Calu3 (cell line): ENCODE measurements at regions of chr15 and their contacts with region 1.

Region 1: GRCh38 chr15:89057504-89058133 is 30.6 kb upstream of the ABHD2 start:
- DNase-seq: peak; percentile 95
- H3K4me3 Mint-ChIP-seq: no peak overlapping the region
- H3K27ac Mint-ChIP-seq: peak overlapping the region; percentile 30
- H3K4me1 Mint-ChIP-seq: peaks cover 47% of the 10 kb centered on the region
- H3K27me3 Mint-ChIP-seq: no peaks in the 10 kb centered on the region
- CTCF ChIP-seq: peak; percentile 99

Region 2: DNA sequence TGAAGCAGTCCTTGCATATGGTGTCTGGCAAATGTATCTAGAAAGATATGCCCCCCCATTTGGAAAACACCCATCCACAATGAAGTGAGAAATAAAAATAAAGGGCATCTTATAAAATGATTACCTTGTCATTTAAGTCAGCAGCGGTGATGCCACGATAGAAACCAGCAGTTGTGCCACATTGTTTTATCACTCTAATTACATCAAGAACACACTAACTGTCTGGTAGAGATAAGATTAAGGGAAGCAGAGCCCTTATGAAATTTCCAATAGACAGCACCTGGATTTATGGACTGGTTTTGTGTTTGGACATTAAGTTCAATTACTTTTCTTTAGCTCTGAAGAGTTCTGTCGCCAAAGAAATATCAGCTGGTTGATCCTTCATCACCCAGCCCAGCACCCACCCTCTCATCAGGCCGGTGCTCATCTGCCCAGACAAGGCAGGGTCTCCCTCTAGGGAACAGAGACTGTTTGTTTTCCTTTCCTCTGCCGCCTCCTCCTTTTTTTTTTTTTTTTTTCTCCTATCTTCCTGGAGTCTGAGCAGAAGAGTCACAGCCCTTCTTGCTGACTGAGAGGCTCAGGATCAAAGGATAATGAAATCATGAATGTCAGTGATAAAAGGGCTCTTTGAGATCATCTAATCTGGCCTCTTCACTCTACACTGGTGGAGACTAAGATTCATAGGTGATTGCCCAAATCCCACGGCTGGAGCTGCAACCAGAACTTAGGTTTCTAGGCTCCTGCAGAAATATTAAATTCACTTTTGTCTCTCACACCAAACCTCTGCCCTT is 1265.2 kb before region 1 on chr15:
- CTCF ChIA-PET with region 1: no interaction called
- intact Hi-C with region 1: no loop called
- DNase-seq: no peak
- H3K4me3 Mint-ChIP-seq: no peak overlapping the region
- H3K27ac Mint-ChIP-seq: no peak overlapping the region
- H3K4me1 Mint-ChIP-seq: no peaks in the 10 kb centered on the region
- H3K27me3 Mint-ChIP-seq: no peaks in the 10 kb centered on the region
- CTCF ChIP-seq: no peak

Region 3: DNA sequence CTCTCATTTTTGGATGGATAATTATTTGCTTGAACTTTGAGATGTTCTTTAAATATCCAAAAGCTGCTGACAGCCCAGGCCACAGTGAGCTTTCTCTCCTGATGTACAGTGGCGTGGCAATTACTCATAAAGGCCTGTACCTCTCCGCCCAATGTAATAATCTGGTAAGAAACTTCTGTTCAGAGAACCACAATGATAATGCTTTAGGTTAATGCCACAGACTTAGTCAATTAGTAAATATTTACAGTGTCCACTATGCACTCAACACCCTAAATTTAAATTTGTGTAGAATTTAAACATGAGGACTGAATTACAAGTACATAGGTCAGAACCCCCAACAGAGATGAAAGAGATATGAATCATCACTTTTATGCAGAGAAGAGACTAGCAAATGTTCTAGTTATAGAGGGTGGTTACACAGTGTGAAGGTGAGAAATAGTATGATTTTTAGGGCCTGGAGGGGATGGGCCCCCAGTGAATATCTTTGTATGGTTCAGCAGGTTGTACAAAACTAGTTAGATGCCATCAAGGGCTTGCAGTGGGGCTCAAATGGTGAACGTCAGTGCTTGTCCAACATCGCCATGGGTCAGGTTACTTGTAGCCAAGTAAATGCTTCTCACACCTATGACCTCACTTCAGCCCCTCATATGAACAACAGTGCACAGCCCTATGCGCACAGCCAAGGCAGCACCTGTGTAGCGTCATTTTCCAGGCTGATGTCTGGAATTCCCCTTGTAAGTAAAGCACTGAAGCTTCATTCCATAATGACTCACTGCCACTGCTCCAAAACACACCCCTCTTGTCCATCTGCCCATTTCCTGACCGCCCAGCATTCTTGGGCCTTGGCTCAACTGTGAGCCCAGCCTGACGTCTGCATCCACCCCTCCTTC is 43.9 kb after region 1 on chr15:
- CTCF ChIA-PET with region 1: interaction called, 7 read pairs
- intact Hi-C with region 1: loop called (anchors 1 kb)
- DNase-seq: peak; percentile 88
- H3K4me3 Mint-ChIP-seq: peak overlapping the region; percentile 1
- H3K27ac Mint-ChIP-seq: peak overlapping the region; percentile 69
- H3K4me1 Mint-ChIP-seq: peaks cover 66% of the 10 kb centered on the region
- H3K27me3 Mint-ChIP-seq: no peaks in the 10 kb centered on the region
- CTCF ChIP-seq: no peak

Region 4: GRCh38 chr15:89119489-89120123 is 62.0 kb after region 1 on chr15:
- CTCF ChIA-PET with region 1: no interaction called
- intact Hi-C with region 1: loop called (anchors 2 kb)
- DNase-seq: peak; percentile 62
- H3K4me3 Mint-ChIP-seq: peak overlapping the region; percentile 54
- H3K27ac Mint-ChIP-seq: peak overlapping the region; percentile 98
- H3K4me1 Mint-ChIP-seq: peaks cover 98% of the 10 kb centered on the region
- H3K27me3 Mint-ChIP-seq: no peaks in the 10 kb centered on the region
- CTCF ChIP-seq: no peak

Region 5: DNA sequence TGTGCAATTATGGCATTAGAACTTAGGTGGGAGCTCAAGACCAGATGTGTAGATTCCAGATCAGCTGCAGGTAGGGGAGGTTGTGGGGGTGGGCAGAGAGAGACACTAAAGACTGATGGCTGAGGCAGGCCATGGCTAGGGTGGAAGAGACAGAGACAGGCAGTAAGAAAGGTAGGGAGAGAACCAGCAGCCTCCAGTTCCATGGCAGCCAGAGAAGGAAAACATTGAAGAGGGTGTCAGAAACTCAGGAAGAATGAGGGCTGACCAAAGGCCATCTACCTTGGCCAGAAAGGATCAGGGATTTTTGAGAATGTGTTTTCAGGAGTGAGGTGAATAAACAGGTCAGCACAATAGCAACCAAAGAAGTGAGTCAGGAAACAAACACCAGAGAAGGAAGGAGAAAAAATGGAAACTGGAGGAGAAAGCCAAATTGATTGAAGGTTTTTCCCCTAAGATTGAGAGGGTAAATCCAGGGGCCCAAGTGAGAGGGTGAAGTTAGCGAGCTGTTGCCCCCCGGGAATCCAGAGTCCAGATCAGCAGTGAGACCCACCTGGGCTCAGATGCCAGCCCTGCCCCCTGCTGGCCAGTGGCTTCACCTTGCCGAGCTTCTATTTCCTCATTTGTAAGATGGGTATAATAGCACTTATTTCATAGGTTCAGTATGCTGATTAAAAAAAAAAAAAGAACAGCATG is 71.7 kb after region 1 on chr15:
- CTCF ChIA-PET with region 1: interaction called, 6 read pairs
- intact Hi-C with region 1: loop called (anchors 1 kb)
- DNase-seq: peak; percentile 78
- H3K4me3 Mint-ChIP-seq: no peak overlapping the region
- H3K27ac Mint-ChIP-seq: no peak overlapping the region
- H3K4me1 Mint-ChIP-seq: peaks cover 35% of the 10 kb centered on the region
- H3K27me3 Mint-ChIP-seq: no peaks in the 10 kb centered on the region
- CTCF ChIP-seq: peak; percentile 79

Region 6: DNA sequence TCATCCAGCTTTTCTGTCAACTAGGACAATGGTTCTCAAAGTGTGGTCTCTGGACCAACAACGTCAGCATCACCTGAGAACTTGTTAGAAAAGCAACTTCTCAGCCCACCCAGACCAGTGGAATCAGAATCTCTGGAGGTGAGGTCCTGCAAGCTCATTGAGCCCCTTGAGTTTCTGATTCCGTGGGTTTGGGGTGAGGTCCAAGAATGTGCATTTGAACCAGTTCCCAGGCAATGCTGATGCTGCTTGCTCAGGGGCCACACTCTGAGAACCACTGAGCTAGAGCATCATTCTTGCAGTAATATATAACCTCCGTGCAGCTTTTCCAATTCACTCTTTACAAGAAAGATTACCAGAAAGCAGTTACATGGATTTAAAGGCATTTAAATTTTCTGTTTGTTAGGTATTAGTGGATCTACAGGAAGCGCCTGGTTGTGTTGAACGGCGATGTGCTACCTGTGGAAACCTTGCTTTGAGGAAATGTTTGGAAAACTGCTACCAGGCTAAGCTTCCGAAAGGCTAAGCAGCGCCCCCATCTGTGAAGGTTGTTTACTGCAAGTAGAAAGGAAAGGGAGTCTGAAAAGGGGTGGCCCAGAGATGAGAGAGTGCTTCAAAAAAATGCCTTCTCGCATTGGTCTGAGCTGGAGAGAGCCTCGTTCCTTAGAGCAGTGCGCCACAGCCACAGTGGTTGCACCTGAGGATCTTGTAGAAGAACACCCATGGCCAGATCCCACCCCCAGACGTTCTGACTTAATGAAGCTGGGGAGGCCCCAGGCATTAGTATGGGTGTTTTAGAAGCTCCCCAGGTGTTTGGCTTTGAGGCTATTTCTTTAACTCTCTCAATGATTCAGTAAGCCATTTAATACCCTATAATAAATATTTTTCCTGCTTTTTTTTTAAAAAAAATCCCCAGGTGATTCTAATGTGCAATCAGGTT is 113.8 kb after region 1 on chr15:
- CTCF ChIA-PET with region 1: interaction called, 15 read pairs
- intact Hi-C with region 1: loop called (anchors 1 kb)
- DNase-seq: peak; percentile 80
- H3K4me3 Mint-ChIP-seq: no peak overlapping the region
- H3K27ac Mint-ChIP-seq: no peak overlapping the region
- H3K4me1 Mint-ChIP-seq: peaks cover 35% of the 10 kb centered on the region
- H3K27me3 Mint-ChIP-seq: no peaks in the 10 kb centered on the region
- CTCF ChIP-seq: peak; percentile 81

Region 7: DNA sequence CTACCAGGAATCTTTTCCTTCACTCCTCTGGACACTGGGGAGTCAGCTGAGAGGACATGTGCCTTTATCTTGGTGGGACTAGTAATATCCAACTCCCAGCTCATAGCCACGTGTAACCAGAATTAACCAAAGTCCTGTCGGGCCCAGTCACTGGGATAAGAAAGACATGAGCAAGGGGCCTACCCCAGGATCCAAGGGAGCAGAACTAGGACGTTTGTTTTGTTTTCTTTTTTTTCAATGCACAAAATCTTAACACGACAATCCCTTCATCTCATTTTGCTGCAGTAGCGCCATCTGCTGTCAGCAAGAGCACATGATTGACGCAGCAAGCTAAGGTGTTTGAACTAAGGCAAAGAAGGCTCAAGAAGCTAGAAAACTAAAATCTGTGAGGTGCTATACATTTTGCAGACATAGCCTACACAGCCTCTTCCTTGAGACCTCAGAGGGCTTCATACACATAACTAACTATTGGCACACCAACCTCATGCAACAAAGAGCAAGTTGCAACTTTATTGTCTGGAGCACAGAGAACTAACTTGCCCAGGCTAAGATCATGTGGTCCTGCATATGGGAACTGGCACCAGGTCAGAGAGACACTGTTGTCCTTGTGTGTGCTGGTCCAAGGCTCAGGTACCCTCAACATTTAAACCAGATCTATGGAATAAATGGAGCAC is 120.2 kb after region 1 on chr15:
- CTCF ChIA-PET with region 1: interaction called, 12 read pairs
- intact Hi-C with region 1: loop called (anchors 1 kb)
- DNase-seq: peak; percentile 70
- H3K4me3 Mint-ChIP-seq: no peak overlapping the region
- H3K27ac Mint-ChIP-seq: no peak overlapping the region
- H3K4me1 Mint-ChIP-seq: no peaks in the 10 kb centered on the region
- H3K27me3 Mint-ChIP-seq: no peaks in the 10 kb centered on the region
- CTCF ChIP-seq: peak; percentile 76